ENCODE measurements at regions of chr4 and their contacts with region 1.

Region 1: DNA sequence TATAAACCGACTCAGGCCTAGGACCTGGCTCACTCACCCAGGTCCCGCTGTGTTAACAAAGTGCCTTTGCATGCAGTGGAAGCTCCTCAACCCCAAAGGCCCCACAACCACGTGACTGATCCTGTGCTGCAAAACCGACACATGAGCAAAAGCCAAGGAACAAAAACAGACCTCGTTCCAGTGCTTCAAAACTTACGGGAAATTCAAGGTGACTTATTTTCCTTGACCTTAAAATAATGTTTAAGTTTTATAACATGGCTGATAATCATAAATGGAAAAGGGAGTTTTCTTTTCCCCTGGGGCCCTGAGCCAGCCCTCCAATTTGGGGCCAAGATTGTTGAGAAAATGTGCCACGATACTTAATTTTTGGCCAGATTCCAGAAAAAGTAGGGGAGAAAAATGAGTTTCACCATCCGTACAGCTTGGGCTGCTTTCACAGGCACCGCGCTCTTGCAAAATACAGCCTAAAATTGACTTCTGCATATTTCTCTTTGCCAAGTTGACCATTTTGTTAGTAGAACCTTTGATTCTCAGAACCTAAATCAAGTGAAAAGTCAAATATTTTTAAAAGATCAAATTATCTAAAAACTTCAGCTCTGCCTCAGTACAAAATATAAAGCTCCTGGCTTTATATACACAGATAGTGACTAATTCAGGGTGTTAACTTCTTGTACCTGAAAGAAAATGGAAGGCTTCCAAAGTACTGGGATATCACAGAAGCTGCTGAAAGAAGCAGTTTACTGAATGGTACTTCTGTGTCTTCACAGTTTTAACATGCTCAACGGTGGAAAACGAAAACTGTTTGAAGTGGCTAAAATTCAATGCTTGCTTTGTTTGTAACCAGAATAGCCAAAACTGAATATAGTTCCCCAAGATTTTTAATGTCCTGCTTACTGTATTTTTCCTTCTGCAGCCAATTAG is 93.8 kb downstream of the APBB2 start:
- DNase-seq: peak; percentile 91
- H3K4me3 Mint-ChIP-seq: peak overlapping the region; percentile 77
- H3K27ac Mint-ChIP-seq: peak overlapping the region; percentile 92
- H3K4me1 Mint-ChIP-seq: peaks cover 60% of the 10 kb centered on the region
- H3K27me3 Mint-ChIP-seq: no peaks in the 10 kb centered on the region
- CTCF ChIP-seq: no peak

Region 2: DNA sequence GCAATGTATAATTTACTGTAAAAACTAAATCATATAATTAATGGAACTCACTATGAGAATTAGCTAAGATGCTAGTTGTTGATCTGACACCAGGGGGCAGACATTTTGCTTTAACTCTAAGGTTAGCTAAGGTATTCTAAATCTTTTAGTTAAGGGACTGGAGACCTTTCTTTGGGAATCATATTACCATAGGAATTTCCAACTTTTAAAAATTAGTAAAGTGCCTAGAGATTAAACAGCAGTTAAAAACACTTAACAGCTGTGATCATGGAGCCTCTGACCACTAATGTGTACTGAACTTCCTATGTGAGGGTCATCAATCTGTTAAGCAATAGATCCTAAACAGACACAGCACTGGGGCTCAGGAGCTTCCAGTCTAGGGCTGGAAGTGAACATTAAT is 144.2 kb before region 1 on chr4:
- CTCF ChIA-PET with region 1: interaction called, 3 read pairs
- POLR2A ChIA-PET with region 1: interaction called, 7 read pairs
- intact Hi-C with region 1: loop called (anchors 1 kb)
- DNase-seq: peak; percentile 77
- H3K4me3 Mint-ChIP-seq: no peak overlapping the region
- H3K27ac Mint-ChIP-seq: peak overlapping the region; percentile 55
- H3K4me1 Mint-ChIP-seq: peaks cover 15% of the 10 kb centered on the region
- H3K27me3 Mint-ChIP-seq: no peaks in the 10 kb centered on the region
- CTCF ChIP-seq: peak; percentile 49

Region 3: DNA sequence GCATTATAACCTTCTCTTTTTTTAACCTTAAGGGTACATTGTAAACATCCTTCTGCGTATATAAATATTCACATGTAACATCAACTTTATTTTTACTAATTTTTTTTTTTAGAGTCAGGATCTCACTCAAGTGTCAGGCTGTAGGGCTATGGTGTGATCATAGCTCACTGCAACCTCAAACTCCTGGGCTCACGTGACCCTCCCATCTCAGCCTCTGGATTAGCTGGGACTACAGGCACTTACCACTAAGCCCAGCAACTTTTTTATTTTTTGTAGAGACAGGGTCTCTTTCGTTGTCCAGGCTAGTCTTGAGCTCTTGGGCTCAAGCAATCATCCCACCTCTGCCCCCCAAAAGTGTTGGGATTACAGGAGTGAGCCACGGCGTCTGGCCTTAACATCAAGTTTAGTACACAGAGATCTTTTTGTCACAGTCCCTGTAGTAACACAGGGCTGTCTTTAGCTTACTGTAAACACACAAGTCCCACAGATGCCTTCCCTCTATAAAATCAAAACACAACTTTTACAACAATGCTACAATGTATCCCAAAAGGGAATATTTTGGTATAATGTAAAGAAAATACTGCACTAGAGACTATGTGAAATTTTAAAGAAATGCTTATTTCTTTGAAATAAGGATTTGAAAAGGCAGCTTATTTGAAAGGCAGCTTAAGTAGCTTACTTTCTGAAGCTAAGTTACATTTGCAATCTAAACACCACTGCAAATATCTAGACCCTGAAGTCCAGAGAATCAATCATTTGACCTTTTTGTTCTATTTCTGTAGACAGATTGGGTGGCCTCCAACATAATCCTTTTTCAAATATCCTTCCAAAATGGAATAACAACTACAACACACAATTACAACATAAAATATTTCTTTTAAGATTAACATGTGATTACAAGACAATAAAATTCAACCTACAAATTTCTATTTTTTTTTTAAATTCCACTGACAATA is 22.2 kb before region 1 on chr4:
- CTCF ChIA-PET with region 1: no interaction called
- POLR2A ChIA-PET with region 1: interaction called, 25 read pairs
- intact Hi-C with region 1: no loop called
- DNase-seq: no peak
- H3K4me3 Mint-ChIP-seq: no peak overlapping the region
- H3K27ac Mint-ChIP-seq: peak overlapping the region; percentile 39
- H3K4me1 Mint-ChIP-seq: peaks cover 27% of the 10 kb centered on the region
- H3K27me3 Mint-ChIP-seq: no peaks in the 10 kb centered on the region
- CTCF ChIP-seq: no peak

Region 4: GRCh38 chr4:41154814-41155177 is 34.2 kb after region 1 on chr4:
- CTCF ChIA-PET with region 1: interaction called, 6 read pairs
- POLR2A ChIA-PET with region 1: interaction called, 134 read pairs
- intact Hi-C with region 1: loop called (anchors 2 kb)
- DNase-seq: peak; percentile 78
- H3K4me3 Mint-ChIP-seq: peak overlapping the region; percentile 61
- H3K27ac Mint-ChIP-seq: peak overlapping the region; percentile 86
- H3K4me1 Mint-ChIP-seq: peaks cover 63% of the 10 kb centered on the region
- H3K27me3 Mint-ChIP-seq: no peaks in the 10 kb centered on the region
- CTCF ChIP-seq: peak; percentile 17

Region 5: GRCh38 chr4:41185614-41186597 is 65.3 kb after region 1 on chr4:
- CTCF ChIA-PET with region 1: no interaction called
- POLR2A ChIA-PET with region 1: interaction called, 34 read pairs
- intact Hi-C with region 1: no loop called
- DNase-seq: peak; percentile 46
- H3K4me3 Mint-ChIP-seq: peak overlapping the region; percentile 49
- H3K27ac Mint-ChIP-seq: peak overlapping the region; percentile 76
- H3K4me1 Mint-ChIP-seq: peaks cover 64% of the 10 kb centered on the region
- H3K27me3 Mint-ChIP-seq: no peaks in the 10 kb centered on the region
- CTCF ChIP-seq: no peak